ENCODE measurements at regions of chr10 and their contacts with region 1.

Region 1: GRCh38 chr10:33193057-33193700 is 141.3 kb downstream of the NRP1 start:
- DNase-seq: peak; percentile 80
- ATAC-seq: peak; percentile 12; the same call in 1 of the 3 replicates
- H3K4me3 ChIP-seq: no peak overlapping the region
- H3K27ac ChIP-seq: no peak overlapping the region
- H3K4me1 ChIP-seq: peaks cover 53% of the 10 kb centered on the region
- H3K27me3 ChIP-seq: no peaks in the 10 kb centered on the region
- CTCF ChIP-seq: peak; percentile 85
- EP300 ChIP-seq: no peak
- POLR2A ChIP-seq: no peak
- RAD21 ChIP-seq: peak; percentile 73

Region 2: GRCh38 chr10:32958085-32959005 is 234.8 kb before region 1 on chr10 and contains the start of gene ITGB1:
- CTCF ChIA-PET with region 1: no interaction called
- POLR2A ChIA-PET with region 1: no interaction called
- in situ Hi-C with region 1: no loop called
- intact Hi-C with region 1: no loop called
- DNase-seq: peak; percentile 86
- ATAC-seq: peak; percentile 93
- H3K4me3 ChIP-seq: peak within 1 kb of the TSS; percentile 91 to 95 (median 95)
- H3K27ac ChIP-seq: peak within 1 kb of the TSS; percentile 96
- H3K4me1 ChIP-seq: peaks cover 56% of the 10 kb centered on the region
- H3K27me3 ChIP-seq: no peaks in the 10 kb centered on the region; a peak in 1 of 5 replicates
- CTCF ChIP-seq: 0 out of 2 replicates have a peak, but pooled peaks have one; percentile 6
- EP300 ChIP-seq: peak in 1 of 2 experiments; percentile 52; a peak in 1 of 4 replicates
- POLR2A ChIP-seq: peak; percentile 93 to 94
- RAD21 ChIP-seq: peak; percentile 37; the same call in 1 of the 2 replicates
- total RNA-seq, gene ITGB1: 123 and 190 TPM in 2 replicates

Region 3: GRCh38 chr10:33155720-33156638 is 37.2 kb before region 1 on chr10:
- CTCF ChIA-PET with region 1: no interaction called
- POLR2A ChIA-PET with region 1: interaction called, 8 read pairs
- in situ Hi-C with region 1: no loop called
- intact Hi-C with region 1: loop called (anchors 1 kb)
- DNase-seq: peak; percentile 99
- ATAC-seq: peak; percentile 96
- H3K4me3 ChIP-seq: no peak overlapping the region
- H3K27ac ChIP-seq: no peak overlapping the region
- H3K4me1 ChIP-seq: peaks cover 56% of the 10 kb centered on the region
- H3K27me3 ChIP-seq: no peaks in the 10 kb centered on the region
- CTCF ChIP-seq: peak; percentile 87
- EP300 ChIP-seq: peak; percentile 90 to 100
- POLR2A ChIP-seq: no peak
- RAD21 ChIP-seq: peak; percentile 50; the same call in 1 of the 2 replicates

Region 4: DNA sequence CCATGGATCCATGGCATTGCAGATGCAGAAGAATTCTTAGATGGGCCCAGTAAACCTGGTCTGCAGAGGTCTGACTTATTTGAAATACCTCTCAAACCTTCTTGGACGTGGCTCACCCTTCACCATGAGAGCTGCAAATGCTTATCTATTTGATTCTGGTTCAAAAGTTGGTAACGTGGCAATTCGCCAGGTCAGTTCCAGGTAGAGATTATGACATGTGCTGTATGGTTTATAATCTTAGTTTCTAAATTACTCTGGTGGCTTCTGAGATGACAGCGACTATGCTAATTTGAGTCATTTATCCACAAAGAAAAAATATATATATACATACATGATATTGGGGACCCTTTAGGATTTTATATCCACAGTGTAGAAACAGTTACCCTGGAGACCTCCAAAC is 72.4 kb after region 1 on chr10:
- CTCF ChIA-PET with region 1: no interaction called
- POLR2A ChIA-PET with region 1: no interaction called
- in situ Hi-C with region 1: no loop called
- intact Hi-C with region 1: loop called (anchors 2 kb)
- DNase-seq: no peak
- ATAC-seq: no peak
- H3K4me3 ChIP-seq: no peak overlapping the region
- H3K27ac ChIP-seq: no peak overlapping the region
- H3K4me1 ChIP-seq: peaks cover 36% of the 10 kb centered on the region
- H3K27me3 ChIP-seq: no peaks in the 10 kb centered on the region
- CTCF ChIP-seq: no peak
- EP300 ChIP-seq: no peak
- POLR2A ChIP-seq: no peak
- RAD21 ChIP-seq: no peak

Region 5: DNA sequence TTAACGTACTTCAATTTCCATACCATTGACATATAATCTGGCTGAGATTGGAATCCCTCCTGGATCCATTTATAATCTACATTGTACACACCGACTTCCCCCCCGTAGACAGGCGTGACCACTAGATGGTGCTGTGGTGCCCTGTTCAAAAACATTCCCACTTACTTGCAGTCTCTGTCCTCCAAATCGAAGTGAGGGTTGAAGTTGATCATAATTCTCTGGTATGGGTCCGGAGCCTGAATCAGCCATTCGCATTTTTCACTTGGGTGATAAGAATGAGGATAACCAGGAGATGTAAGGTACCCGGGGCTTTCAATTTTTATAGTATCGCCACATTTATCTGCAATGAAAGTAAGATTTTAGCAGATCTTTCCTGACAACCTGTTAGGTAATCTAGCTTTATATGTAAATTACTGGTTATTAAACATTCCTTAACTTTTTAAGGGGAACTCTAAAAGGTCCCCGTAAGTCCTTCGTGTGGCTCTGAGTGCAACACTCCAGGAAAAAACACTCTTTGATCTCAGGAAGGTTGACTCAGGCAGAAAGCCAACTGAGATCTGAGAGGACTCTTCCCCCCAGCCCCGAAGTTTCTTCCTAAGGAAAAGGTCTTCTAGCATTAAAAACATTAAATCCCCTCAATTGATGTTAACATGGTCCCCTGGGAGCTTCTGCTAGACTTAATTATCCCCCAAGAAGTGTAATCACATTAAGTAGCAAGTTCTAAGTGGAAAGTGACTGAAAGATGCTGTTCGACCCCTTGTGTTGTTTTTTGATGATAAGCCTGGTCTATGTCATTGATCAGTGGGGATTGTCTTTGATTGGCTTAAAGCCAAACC is 137.6 kb after region 1 on chr10:
- CTCF ChIA-PET with region 1: interaction called, 9 read pairs
- POLR2A ChIA-PET with region 1: interaction called, 8 read pairs
- in situ Hi-C with region 1: no loop called
- intact Hi-C with region 1: loop called (anchors 1 kb)
- DNase-seq: peak; percentile 73
- ATAC-seq: peak; percentile 35
- H3K4me3 ChIP-seq: peak overlapping the region; percentile 24 to 34 (median 26); a peak in 4 of 6 replicates
- H3K27ac ChIP-seq: no peak overlapping the region
- H3K4me1 ChIP-seq: peaks cover 74% of the 10 kb centered on the region
- H3K27me3 ChIP-seq: peaks cover under 1 to 16% of the 10 kb centered on the region in 2 experiments; a peak in 3 of 5 replicates
- CTCF ChIP-seq: peak; percentile 89
- EP300 ChIP-seq: no peak
- POLR2A ChIP-seq: no peak
- RAD21 ChIP-seq: peak; percentile 74

Region 6: GRCh38 chr10:33801748-33802147 is 608.6 kb after region 1 on chr10:
- CTCF ChIA-PET with region 1: no interaction called
- POLR2A ChIA-PET with region 1: interaction called, 3 read pairs
- in situ Hi-C with region 1: no loop called
- intact Hi-C with region 1: loop called (anchors 10 kb)
- DNase-seq: peak; percentile 85
- ATAC-seq: peak; percentile 92
- H3K4me3 ChIP-seq: no peak overlapping the region
- H3K27ac ChIP-seq: no peak overlapping the region
- H3K4me1 ChIP-seq: peaks cover 52% of the 10 kb centered on the region
- H3K27me3 ChIP-seq: no peaks in the 10 kb centered on the region
- CTCF ChIP-seq: no peak
- EP300 ChIP-seq: 0 out of 4 replicates have a peak, but pooled peaks of 1 of the 2 experiments have one; percentile 26
- POLR2A ChIP-seq: no peak
- RAD21 ChIP-seq: no peak